HCT116 (cell line): ENCODE measurements at regions of chr1 and their contacts with region 1.

Region 1: DNA sequence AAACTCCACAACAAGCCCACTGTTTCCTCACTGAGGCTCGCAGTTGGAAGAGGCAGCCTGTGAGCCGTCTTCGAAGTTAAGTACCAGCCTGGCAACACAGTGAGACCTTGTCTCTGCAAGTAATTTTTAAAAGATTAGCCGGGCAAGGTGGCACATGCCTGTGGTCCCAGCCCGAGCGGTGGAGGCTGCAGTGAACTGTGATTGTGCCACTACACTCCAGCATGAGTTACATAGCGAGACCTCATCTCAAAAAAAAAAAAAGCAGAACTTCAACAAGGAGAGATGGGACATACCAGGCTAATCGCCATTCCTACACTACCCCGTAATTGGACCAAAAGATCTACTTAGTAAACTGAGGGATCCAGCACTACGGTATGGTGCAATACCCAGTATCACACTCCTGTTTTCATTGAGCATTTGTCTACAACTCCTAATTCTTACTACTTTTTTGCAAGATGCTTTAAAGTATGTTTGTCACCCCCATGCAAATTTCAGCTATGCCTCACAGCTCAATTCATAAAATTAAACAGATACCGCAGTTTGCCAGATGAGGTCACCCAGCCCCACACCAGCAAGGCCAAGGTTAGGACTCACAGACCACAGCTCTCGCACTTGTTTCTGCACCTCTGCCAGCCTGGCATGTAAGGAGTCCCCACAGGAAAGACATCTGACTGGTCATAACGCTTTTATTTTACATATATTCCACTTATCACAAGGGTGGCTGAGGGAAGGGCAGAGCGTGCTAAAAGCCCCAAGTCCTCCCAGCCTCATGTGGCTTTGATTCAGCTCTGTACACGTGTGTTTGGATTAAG is 21.0 kb downstream of the SDE2 start:
- DNase-seq: no peak
- ATAC-seq: no peak
- H3K4me3 ChIP-seq: no peak overlapping the region
- H3K27ac ChIP-seq: no peak overlapping the region
- H3K4me1 ChIP-seq: no peaks in the 10 kb centered on the region
- H3K27me3 ChIP-seq: no peaks in the 10 kb centered on the region
- CTCF ChIP-seq: no peak
- POLR2A ChIP-seq: no peak
- RAD21 ChIP-seq: peak; percentile 23; the same call in 1 of the 2 replicates

Region 2: GRCh38 chr1:224513787-224514209 is 1464.3 kb before region 1 on chr1:
- CTCF ChIA-PET with region 1: no interaction called
- POLR2A ChIA-PET with region 1: no interaction called
- RAD21 ChIA-PET with region 1: no interaction called
- intact Hi-C with region 1: loop called (anchors 10 kb)
- DNase-seq: peak; percentile 68
- ATAC-seq: peak; percentile 100
- H3K4me3 ChIP-seq: no peak overlapping the region
- H3K27ac ChIP-seq: no peak overlapping the region
- H3K4me1 ChIP-seq: peaks cover 0 to 5% of the 10 kb centered on the region in 2 experiments; a peak in 1 of 4 replicates
- H3K27me3 ChIP-seq: no peaks in the 10 kb centered on the region
- CTCF ChIP-seq: peak; percentile 84 to 98 (median 94)
- POLR2A ChIP-seq: no peak
- RAD21 ChIP-seq: peak; percentile 99

Region 3: DNA sequence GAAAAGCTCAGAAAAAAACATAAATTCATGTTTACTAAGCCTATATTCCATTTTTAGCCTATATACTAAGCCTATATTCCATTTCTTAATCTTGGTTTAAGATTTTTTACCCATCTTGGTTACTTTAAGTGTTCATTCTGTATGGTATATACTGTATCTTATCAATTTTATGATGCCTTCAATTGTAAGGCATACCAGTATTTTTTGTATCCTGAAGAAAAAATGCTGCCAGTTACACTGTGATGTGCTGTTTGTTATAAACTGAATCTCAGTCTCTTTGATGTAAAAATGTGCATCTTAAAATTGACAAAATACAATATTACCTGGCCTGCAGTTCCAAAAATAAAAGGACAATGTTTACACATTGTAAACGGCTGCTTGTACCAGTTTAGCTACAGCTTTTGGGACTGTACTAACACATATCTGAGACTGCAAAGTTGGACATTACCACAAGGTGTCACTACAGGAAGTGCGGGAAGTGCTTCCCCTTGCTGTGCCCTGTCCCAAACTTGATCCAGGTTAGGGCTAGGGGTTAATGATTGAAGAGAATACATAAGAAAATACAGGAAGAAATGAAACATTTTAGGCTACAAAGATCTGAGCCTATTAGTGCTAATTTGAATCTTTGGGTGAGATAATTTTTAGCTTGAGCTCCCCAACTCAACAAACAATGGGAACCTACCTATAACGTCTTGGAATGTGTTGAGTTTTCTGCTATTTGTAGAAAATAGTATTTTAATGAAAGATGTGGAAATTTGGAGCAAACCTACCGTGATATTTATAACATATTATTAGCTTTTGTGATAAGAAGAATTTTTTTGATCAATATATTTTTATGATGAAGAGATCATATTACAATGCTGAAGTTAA is 659.2 kb before region 1 on chr1:
- CTCF ChIA-PET with region 1: no interaction called
- POLR2A ChIA-PET with region 1: no interaction called
- RAD21 ChIA-PET with region 1: no interaction called
- intact Hi-C with region 1: loop called (anchors 2 kb)
- DNase-seq: peak; percentile 36
- ATAC-seq: peak; percentile 100
- H3K4me3 ChIP-seq: no peak overlapping the region
- H3K27ac ChIP-seq: no peak overlapping the region
- H3K4me1 ChIP-seq: no peaks in the 10 kb centered on the region; a peak in 1 of 4 replicates
- H3K27me3 ChIP-seq: no peaks in the 10 kb centered on the region
- CTCF ChIP-seq: peak; percentile 66 to 86 (median 85)
- POLR2A ChIP-seq: no peak
- RAD21 ChIP-seq: peak; percentile 80

Region 4: GRCh38 chr1:225559326-225559725 is 418.8 kb before region 1 on chr1:
- CTCF ChIA-PET with region 1: no interaction called
- POLR2A ChIA-PET with region 1: no interaction called
- RAD21 ChIA-PET with region 1: no interaction called
- intact Hi-C with region 1: loop called (anchors 5 kb)
- DNase-seq: no peak
- ATAC-seq: no peak
- H3K4me3 ChIP-seq: no peak overlapping the region
- H3K27ac ChIP-seq: no peak overlapping the region
- H3K4me1 ChIP-seq: no peaks in the 10 kb centered on the region
- H3K27me3 ChIP-seq: no peaks in the 10 kb centered on the region
- CTCF ChIP-seq: no peak
- POLR2A ChIP-seq: no peak
- RAD21 ChIP-seq: no peak

Region 5: DNA sequence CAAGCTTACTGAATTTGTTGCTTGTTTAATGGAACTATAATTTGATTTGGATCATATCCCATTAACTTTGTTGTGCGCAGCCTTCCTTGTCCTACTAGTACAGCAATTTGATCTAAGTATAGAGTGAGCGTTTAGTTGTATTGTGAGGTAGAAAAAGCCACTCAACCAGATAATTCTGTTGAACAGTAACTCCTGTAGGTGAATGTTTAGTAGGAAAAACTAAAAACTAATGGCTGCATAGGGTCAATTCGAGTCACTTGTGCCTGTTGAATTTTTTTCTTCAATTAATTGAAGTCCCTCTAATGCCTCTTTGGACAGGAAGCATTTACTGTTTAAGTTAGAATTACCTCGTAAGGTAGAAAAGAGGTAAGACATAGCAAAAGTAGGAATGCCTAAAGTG is 183.2 kb before region 1 on chr1:
- CTCF ChIA-PET with region 1: no interaction called
- POLR2A ChIA-PET with region 1: no interaction called
- RAD21 ChIA-PET with region 1: no interaction called
- intact Hi-C with region 1: no loop called
- DNase-seq: no peak
- ATAC-seq: no peak
- H3K4me3 ChIP-seq: no peak overlapping the region
- H3K27ac ChIP-seq: no peak overlapping the region
- H3K4me1 ChIP-seq: no peaks in the 10 kb centered on the region
- H3K27me3 ChIP-seq: no peaks in the 10 kb centered on the region
- CTCF ChIP-seq: no peak
- POLR2A ChIP-seq: no peak
- RAD21 ChIP-seq: no peak

Region 6: DNA sequence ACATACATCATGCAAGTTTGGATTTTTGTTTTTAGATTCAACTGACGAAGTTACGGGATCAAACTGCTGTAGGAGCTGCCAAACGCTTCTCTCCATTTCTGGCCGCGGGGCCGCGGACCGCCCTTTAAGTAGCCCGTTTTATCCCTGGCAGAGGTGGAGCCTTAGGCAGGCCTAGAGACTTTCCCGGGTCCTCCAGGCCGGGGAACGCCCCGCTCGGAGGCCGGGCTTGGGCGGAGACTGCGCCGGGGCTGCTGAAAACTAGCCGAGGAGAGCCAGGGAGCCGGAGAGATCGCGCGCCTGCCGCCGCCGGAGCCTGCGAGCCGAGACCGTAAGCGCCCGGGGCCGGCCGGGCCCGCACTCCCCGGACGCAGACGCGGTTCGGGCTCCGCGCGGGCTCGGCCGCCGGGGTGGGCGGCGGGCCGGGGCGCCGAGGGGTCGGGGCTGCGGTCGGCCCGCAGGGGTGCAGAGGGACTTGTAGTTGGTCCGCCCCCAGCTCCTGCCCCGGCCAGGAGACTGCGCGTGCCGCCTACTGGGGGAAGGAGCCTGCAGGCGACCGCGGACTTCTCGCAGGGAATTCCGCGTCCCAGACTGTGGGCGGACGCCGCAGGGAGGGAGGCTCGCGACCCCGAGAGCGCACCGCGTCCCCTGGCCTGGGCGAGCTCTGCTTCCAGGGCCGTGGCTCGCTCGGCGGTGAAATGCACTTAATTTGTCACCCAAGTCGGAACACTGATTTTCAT is 168.1 kb before region 1 on chr1 and contains the start of gene EPHX1:
- CTCF ChIA-PET with region 1: no interaction called
- POLR2A ChIA-PET with region 1: no interaction called
- RAD21 ChIA-PET with region 1: no interaction called
- intact Hi-C with region 1: loop called (anchors 1 kb)
- DNase-seq: peak; percentile 71
- ATAC-seq: peak; percentile 98
- H3K4me3 ChIP-seq: peak within 1 kb of the TSS; percentile 66 to 67
- H3K27ac ChIP-seq: peak within 1 kb of the TSS; percentile 69
- H3K4me1 ChIP-seq: peaks cover 13 to 25% of the 10 kb centered on the region in 2 experiments
- H3K27me3 ChIP-seq: no peaks in the 10 kb centered on the region
- CTCF ChIP-seq: peak in 1 of 3 experiments; percentile 32; a peak in 1 of 6 replicates
- POLR2A ChIP-seq: peak; percentile 94
- RAD21 ChIP-seq: peak; percentile 11; the same call in 1 of the 2 replicates
- total RNA-seq, gene EPHX1: 44.6 TPM

Region 7: DNA sequence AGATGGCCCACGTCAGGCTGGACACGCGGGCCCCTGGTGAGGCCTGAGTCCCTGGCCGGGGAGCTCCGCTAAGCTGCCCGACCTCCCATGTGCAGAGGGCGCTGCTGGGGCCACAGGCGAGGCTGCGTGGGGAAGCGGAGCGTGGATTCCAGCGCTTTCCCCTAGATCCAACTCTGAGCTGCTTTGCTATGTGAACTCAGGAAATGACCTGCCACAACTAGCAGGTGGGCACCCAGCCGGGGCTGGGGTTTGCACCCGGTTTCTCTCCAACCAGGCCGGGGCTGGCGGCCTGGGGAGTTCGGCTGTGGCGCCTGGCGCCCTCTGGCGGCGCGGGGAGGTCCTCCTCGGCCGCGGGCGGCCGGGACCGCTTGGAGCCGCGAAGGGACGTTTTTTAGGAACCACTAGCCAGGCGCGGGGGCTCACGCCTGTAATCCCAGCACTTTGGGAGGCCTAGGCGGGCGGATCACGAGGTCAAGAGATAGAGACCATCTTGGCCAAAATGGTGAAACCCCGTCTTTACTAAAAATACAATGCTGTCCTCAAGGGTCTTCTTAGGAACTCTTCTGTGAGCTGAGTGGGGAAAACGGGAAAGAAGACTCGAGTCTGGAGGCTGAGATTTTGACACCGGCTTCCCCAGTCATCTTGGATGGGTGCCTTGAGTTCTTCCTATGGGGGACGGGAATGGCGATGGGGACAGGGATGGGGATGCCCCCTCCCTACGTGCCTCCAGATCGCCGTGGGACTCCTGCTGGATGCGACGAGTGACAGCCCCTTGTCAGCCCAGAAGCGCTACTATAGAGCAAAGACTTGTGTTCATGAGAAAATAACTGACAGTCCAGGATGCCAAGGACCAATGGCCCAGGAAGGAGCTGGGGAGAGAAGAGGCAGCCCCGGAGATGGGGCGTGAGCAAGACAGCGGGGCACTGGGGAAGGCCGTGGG is 66.7 kb before region 1 on chr1:
- CTCF ChIA-PET with region 1: no interaction called
- POLR2A ChIA-PET with region 1: no interaction called
- RAD21 ChIA-PET with region 1: no interaction called
- intact Hi-C with region 1: loop called (anchors 2 kb)
- DNase-seq: peak; percentile 34
- ATAC-seq: peak; percentile 96
- H3K4me3 ChIP-seq: peak overlapping the region in 1 of 2 experiments; percentile 38; a peak in 1 of 4 replicates
- H3K27ac ChIP-seq: no peak overlapping the region
- H3K4me1 ChIP-seq: peaks cover 0 to 11% of the 10 kb centered on the region in 2 experiments; a peak in 3 of 4 replicates
- H3K27me3 ChIP-seq: no peaks in the 10 kb centered on the region
- CTCF ChIP-seq: peak; percentile 90 to 99 (median 95)
- POLR2A ChIP-seq: no peak
- RAD21 ChIP-seq: peak; percentile 89

Region 8: DNA sequence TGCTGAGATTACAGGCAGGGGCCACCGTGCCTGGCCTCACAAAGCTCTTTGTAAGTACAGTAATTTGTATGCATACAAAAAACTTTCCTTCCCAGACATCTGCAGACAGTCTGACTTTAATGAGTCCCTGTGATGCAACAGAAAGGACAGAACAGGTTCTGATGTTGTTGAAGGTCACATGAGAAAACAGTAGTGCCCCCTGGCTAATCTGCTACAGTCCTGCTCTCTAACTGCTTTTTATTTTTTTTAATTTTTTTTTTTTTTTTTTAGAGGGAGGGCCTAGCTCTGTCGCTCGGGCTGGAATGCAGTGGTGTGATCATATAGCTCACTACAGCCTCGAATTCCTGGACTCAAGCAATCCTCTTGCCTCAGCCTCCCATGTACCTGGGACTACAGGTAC is 171.7 kb after region 1 on chr1:
- CTCF ChIA-PET with region 1: no interaction called
- POLR2A ChIA-PET with region 1: no interaction called
- RAD21 ChIA-PET with region 1: no interaction called
- intact Hi-C with region 1: no loop called
- DNase-seq: no peak
- ATAC-seq: no peak; the same call in 1 of the 2 replicates
- H3K4me3 ChIP-seq: no peak overlapping the region
- H3K27ac ChIP-seq: no peak overlapping the region
- H3K4me1 ChIP-seq: no peaks in the 10 kb centered on the region
- H3K27me3 ChIP-seq: no peaks in the 10 kb centered on the region
- CTCF ChIP-seq: 0 out of 6 replicates have a peak, but pooled peaks of 1 of the 3 experiments have one; percentile 13
- POLR2A ChIP-seq: no peak
- RAD21 ChIP-seq: no peak

Region 9: DNA sequence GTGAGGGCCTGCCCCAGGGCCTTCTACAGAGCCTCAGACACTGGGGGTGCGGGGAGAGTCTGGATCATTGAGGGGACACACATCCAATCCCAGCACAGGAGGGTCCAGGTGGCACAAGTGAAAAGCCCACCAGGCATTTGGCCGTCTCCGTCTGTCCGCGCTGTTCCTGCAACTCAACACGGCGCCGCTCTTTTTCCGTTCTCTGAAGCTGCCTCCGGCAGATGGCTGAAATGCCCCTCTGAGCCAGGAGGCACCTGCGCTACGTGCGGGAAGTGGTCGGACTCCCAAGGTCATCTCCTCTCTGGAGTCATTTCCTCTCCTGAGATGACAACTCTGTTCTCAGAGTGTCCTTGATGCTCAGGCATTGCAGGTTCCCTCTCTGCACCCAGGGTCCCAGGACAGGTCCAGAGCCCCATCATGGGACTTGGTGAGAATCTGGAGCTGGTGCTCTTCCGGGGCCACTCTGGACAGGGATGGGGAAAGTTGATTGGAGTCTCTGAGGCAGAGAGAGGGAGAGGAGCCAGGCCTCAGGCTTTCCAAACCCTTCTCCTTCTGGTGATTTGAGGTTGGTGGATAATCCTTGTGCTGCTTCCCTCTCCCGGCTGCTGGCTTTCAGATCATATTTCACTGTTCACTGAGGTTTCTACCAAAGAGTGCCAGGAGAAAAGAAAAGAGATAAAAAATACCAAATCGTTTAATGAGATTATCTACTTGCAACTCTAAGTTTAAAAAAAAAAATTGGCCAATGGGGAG is 231.3 kb after region 1 on chr1:
- CTCF ChIA-PET with region 1: no interaction called
- POLR2A ChIA-PET with region 1: no interaction called
- RAD21 ChIA-PET with region 1: no interaction called
- intact Hi-C with region 1: no loop called
- DNase-seq: no peak
- ATAC-seq: no peak
- H3K4me3 ChIP-seq: no peak overlapping the region
- H3K27ac ChIP-seq: no peak overlapping the region
- H3K4me1 ChIP-seq: no peaks in the 10 kb centered on the region
- H3K27me3 ChIP-seq: no peaks in the 10 kb centered on the region
- CTCF ChIP-seq: no peak
- POLR2A ChIP-seq: no peak
- RAD21 ChIP-seq: no peak

Region 10: DNA sequence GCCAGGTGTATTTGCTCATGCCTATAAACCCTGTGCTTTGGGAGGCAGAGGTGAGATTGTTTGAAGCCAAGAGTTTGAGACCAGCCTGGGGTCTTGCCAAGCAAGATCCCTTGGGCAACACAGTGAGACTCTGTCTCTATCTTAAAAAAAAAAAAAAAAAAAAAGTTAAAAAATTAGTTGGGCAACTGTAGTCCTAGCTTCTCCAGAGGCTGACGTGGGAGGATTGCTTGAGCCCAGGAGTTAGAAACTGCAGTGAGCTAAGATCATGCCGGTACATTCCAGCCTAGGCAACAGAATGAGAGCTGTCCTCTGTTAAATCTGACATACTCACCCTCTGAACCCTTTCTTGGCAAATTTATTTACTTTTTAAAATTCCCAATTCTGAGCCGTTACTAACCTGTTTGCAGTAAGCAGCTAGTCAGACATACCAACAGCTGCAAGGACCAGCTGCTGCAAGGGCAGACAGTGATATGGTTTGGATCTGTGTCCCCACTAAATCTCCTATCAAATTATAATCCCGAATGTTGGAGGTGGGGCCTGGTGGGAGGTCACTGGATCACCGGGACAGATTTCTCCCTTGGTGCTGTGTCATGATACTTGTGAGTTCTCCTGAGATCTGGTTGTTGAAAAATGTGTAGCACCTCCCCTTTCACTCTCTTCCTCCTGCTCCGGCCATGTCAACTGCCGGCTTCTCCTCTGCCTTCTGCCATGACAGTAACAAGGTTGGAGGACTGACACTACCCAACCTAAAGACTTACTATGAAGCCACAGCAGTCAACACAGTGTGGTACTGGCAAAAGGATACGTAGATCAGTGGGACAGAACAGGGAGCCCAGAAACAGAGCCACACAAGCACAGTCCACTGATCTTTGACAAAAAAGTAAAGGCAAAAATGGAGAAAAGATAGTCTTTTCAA is 419.1 kb after region 1 on chr1:
- CTCF ChIA-PET with region 1: no interaction called
- POLR2A ChIA-PET with region 1: no interaction called
- RAD21 ChIA-PET with region 1: no interaction called
- intact Hi-C with region 1: no loop called
- DNase-seq: no peak
- ATAC-seq: no peak
- H3K4me3 ChIP-seq: no peak overlapping the region
- H3K27ac ChIP-seq: no peak overlapping the region
- H3K4me1 ChIP-seq: no peaks in the 10 kb centered on the region
- H3K27me3 ChIP-seq: no peaks in the 10 kb centered on the region
- CTCF ChIP-seq: no peak
- POLR2A ChIP-seq: no peak
- RAD21 ChIP-seq: no peak